ENCODE measurements at regions of chr3 and their contacts with region 1.

Region 1: DNA sequence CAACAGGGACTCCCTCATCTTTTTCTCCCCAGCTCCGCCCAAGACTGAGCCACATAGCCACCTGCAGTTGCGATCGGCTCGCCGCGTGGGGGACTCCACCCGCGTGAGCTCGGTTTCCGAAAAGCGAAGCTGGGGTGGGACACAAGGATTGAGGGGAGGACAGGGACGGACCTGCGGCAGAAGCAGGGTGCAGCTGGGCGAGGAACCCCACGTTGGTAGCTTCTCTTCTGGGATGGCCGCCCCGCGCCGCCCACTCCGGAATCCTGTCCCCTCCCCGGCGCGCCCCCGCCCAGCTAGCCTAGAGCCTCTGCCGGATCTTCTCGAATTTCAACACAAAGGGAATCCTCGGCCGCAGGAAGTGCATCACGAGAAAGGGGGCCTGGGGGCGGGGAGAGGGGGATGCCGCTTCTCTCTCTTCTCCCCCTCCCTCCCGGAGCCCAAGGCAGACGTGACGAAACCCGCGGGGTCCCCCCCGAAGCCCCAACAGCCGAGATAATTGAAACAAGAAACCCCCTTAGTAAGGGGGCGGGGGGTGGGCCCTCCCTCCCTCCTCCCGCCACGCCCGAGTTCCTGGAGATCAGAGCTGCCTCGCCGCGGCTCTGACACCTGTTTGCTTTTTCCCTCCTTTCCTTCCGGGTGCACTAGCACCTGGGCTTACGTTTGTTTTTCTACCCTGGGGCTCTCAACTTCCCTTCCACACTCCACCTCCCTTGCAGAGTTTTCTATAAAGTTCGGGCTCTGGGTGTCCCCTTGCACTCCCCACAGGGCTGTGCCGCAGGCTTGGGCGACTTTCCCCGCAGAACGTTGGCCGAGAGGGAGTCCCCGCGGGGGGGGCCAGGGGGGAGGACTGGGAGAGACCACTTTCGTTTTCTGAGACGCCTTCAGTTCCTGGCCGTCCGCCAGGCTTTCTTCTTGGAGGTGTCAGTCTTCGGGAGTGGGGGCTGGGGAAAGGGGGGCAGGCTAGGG is 1.3 kb upstream of the KCNH8 start:
- DNase-seq: peak; percentile 58 to 65
- H3K4me3 ChIP-seq: peak overlapping the region; percentile 51 to 74 (median 67)
- H3K27ac ChIP-seq: peak overlapping the region; percentile 79 to 80
- H3K4me1 ChIP-seq: no peaks in the 10 kb centered on the region
- H3K27me3 ChIP-seq: no peaks in the 10 kb centered on the region
- CTCF ChIP-seq: peak in 2 of 3 donors; percentile 53 to 57
- POLR2A ChIP-seq: no peak

Region 2: GRCh38 chr3:19173945-19174344 is 27.0 kb after region 1 on chr3:
- intact Hi-C with region 1: loop called (anchors 2 kb)
- DNase-seq: no peak
- H3K4me3 ChIP-seq: no peak overlapping the region
- H3K27ac ChIP-seq: no peak overlapping the region
- H3K4me1 ChIP-seq: no peaks in the 10 kb centered on the region
- H3K27me3 ChIP-seq: no peaks in the 10 kb centered on the region
- CTCF ChIP-seq: no peak
- POLR2A ChIP-seq: no peak

Region 3: DNA sequence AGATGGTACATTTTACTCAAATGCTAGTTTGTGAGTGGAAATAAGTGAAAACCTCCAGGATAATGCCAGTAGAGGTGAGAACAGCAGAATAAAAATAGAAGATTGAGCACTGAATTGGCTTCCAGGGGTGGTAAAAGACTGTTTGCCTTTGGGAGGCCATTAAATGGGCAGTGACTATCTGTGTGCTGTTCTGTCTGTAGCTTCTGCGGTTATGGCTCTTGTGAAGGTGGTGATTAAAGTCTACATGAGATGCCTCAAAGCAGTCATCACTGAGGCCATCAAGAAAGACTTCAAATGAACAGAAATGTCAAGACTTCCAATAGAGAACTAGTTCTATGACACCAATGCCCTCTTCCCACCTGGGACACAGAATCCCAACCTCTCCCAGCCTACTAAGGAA is 678.2 kb after region 1 on chr3:
- intact Hi-C with region 1: loop called (anchors 10 kb)
- DNase-seq: no peak
- H3K4me3 ChIP-seq: no peak overlapping the region
- H3K27ac ChIP-seq: no peak overlapping the region
- H3K4me1 ChIP-seq: no peaks in the 10 kb centered on the region
- H3K27me3 ChIP-seq: no peaks in the 10 kb centered on the region
- CTCF ChIP-seq: no peak
- POLR2A ChIP-seq: no peak

Region 4: GRCh38 chr3:20361000-20361399 is 1214.0 kb after region 1 on chr3:
- intact Hi-C with region 1: no loop called
- DNase-seq: no peak
- H3K4me3 ChIP-seq: no peak overlapping the region
- H3K27ac ChIP-seq: no peak overlapping the region
- H3K4me1 ChIP-seq: no peaks in the 10 kb centered on the region
- H3K27me3 ChIP-seq: no peaks in the 10 kb centered on the region
- CTCF ChIP-seq: no peak
- POLR2A ChIP-seq: no peak

Measured in breast epithelium (tissue), 4 donors.